ENCODE measurements at regions of chr12 and their contacts with region 1.

Region 1: GRCh38 chr12:12786716-12787601 is 1.5 kb downstream of the APOLD1 start:
- DNase-seq: peak; percentile 74
- H3K4me3 ChIP-seq: peak overlapping the region; percentile 51 to 62 (median 58)
- H3K27ac ChIP-seq: peak overlapping the region; percentile 40
- H3K4me1 ChIP-seq: peaks cover 27% of the 10 kb centered on the region
- H3K27me3 ChIP-seq: no peaks in the 10 kb centered on the region
- CTCF ChIP-seq: no peak

Region 2: GRCh38 chr12:12724661-12725545 is 62.1 kb before region 1 on chr12:
- CTCF ChIA-PET with region 1: no interaction called
- dilution Hi-C with region 1: no loop called
- in situ Hi-C with region 1: no loop called
- intact Hi-C with region 1: loop called (anchors 1 kb)
- DNase-seq: peak; percentile 97
- H3K4me3 ChIP-seq: peak overlapping the region; percentile 86 to 95 (median 93)
- H3K27ac ChIP-seq: peak overlapping the region; percentile 94
- H3K4me1 ChIP-seq: peaks cover 34% of the 10 kb centered on the region
- H3K27me3 ChIP-seq: no peaks in the 10 kb centered on the region
- CTCF ChIP-seq: no peak

Region 3: DNA sequence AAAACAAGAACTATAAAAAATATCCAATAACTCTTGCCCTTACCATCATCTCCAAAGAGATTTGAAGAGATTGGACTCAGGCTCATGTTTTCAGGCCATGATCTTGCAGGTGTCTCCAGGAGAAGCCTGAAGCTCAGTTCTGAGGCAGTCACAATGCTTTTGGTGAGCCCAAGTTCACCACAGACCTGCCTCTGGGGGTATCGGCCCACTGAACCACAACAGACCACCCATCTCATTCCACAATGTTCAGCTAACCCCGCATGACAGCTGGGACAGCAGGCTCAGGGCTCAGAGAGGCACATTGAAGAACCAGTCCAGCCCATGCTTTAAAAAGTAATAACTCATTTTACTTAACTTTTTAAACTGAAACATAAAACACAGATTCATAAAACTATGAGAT is 29.8 kb before region 1 on chr12:
- CTCF ChIA-PET with region 1: no interaction called
- dilution Hi-C with region 1: no loop called
- in situ Hi-C with region 1: no loop called
- intact Hi-C with region 1: no loop called
- DNase-seq: no peak
- H3K4me3 ChIP-seq: no peak overlapping the region
- H3K27ac ChIP-seq: no peak overlapping the region
- H3K4me1 ChIP-seq: no peaks in the 10 kb centered on the region
- H3K27me3 ChIP-seq: no peaks in the 10 kb centered on the region
- CTCF ChIP-seq: no peak

Region 4: DNA sequence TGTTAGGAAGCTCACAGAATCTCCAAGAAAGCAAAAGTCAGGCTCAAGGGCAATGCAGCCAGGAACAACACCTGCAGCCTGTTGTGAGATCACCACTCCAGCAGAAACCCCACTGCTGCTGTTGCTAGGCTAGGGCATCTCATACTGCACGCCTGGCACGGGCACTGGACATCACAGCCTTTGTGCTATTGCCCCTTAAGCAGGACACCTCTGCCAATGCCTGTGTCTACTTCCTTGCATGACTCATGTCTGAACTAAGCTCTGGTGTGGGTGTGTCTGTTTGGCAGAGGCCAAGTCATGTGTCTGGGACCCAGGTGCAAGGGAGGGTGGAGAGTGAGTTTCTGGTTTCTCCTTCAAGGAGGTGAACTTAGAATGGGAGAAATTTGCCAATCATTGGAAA is 16.2 kb after region 1 on chr12:
- CTCF ChIA-PET with region 1: no interaction called
- dilution Hi-C with region 1: no loop called
- in situ Hi-C with region 1: no loop called
- intact Hi-C with region 1: loop called (anchors 1 kb)
- DNase-seq: peak; percentile 100
- H3K4me3 ChIP-seq: no peak overlapping the region
- H3K27ac ChIP-seq: peak overlapping the region; percentile 100
- H3K4me1 ChIP-seq: peaks cover 39% of the 10 kb centered on the region
- H3K27me3 ChIP-seq: no peaks in the 10 kb centered on the region
- CTCF ChIP-seq: no peak

Region 5: DNA sequence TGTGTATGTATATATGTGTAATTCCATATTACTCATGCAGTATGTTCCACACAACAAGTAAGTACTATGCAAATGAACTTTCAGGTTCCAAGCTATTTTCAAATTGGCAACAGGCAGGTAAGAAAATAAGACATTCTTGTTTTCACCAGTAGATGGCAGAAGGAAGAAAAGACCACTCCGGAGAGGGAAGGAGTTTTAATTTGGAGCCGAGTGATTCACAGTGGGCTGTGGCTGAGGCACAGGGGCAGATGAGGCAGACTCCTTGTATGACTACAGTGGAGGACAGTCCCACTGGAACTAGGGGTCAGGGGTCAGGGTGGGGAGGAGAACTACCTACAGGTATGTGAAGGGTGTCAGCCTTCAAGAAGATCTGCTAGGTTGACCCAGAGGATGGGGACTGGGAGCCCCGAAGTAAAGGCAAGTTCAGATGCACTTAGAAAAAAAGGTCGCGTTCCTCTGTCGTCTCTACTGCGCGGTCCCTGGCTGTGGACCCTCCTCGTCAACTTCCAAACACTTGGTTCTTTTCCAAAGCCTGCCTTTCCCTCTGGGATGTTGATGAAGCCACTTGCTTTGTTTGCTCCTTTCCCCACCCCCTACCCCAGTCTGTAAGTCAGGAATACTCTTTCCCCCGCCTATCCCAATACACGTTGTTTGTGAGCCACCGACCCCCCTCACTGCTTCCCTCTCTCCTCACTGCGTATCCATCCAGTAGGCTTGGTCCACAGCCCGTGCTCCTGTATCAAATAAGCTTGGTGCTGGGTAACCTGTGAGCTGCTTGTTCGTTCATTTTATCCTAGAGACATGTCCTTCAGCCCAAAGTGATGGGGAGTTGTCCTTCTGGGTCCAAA is 50.3 kb after region 1 on chr12:
- CTCF ChIA-PET with region 1: interaction called, 3 read pairs
- dilution Hi-C with region 1: no loop called
- in situ Hi-C with region 1: no loop called
- intact Hi-C with region 1: loop called (anchors 1 kb)
- DNase-seq: peak; percentile 91
- H3K4me3 ChIP-seq: no peak overlapping the region
- H3K27ac ChIP-seq: peak overlapping the region; percentile 99
- H3K4me1 ChIP-seq: peaks cover 68% of the 10 kb centered on the region
- H3K27me3 ChIP-seq: no peaks in the 10 kb centered on the region
- CTCF ChIP-seq: peak; percentile 67 to 69

Region 6: GRCh38 chr12:12899530-12900380 is 112.8 kb after region 1 on chr12:
- CTCF ChIA-PET with region 1: no interaction called
- dilution Hi-C with region 1: no loop called
- in situ Hi-C with region 1: loop called in 1 of 2 experiments (anchors 5 kb)
- intact Hi-C with region 1: no loop called
- DNase-seq: peak; percentile 79
- H3K4me3 ChIP-seq: no peak overlapping the region
- H3K27ac ChIP-seq: peak overlapping the region; percentile 53
- H3K4me1 ChIP-seq: peaks cover 66% of the 10 kb centered on the region
- H3K27me3 ChIP-seq: no peaks in the 10 kb centered on the region
- CTCF ChIP-seq: no peak

Region 7: GRCh38 chr12:12975322-12976077 is 188.5 kb after region 1 on chr12:
- CTCF ChIA-PET with region 1: interaction called, 13 read pairs
- dilution Hi-C with region 1: no loop called
- in situ Hi-C with region 1: loop called in 1 of 2 experiments (anchors 10 kb)
- intact Hi-C with region 1: no loop called
- DNase-seq: peak; percentile 27
- H3K4me3 ChIP-seq: no peak overlapping the region
- H3K27ac ChIP-seq: peak overlapping the region; percentile 41
- H3K4me1 ChIP-seq: peaks cover 24% of the 10 kb centered on the region
- H3K27me3 ChIP-seq: no peaks in the 10 kb centered on the region
- CTCF ChIP-seq: peak; percentile 38 to 61

Region 8: DNA sequence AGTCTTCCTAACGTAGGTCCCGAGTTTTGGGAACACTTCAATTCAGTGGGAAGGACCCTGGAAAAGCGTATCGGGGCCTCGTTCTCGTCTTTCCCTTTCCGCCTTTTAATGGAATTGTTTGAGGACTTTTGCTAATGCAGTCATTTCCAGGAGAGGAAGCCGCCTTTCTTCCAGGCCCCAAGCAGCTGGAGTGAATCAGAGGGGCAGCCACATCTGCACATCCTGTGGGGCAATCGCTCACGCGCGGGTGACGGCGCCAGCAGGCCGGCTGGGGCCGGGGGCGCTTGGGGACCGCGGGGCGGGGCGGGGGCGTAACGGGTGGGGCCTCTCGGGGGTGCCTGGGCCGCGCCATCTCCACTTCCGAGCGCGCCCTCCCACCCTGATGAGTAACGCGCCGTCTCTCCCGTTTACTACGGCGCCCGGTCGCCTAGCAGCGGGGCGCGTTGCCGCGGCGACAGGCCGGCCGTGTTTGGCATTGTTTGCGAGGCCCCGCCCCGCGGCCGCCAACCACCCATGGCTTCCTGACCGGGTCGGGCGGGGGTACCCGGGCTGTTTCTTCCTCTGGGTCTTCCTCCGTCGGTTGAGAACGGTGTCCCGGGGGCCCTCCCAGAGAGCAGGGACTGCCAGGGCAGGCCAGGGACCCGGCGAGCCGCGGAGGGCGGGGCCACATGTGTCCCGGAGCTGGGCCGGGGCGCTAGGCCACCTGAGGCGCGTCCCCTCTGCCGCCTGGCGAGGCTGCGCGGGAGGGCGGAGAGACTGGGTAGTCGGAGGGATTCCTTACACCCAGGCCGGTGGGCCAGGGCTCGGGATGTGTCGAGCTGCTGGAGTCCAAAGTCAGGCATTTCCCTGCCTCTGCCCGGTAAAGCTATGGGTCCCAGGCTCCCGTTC is 314.2 kb after region 1 on chr12:
- CTCF ChIA-PET with region 1: no interaction called
- dilution Hi-C with region 1: no loop called
- in situ Hi-C with region 1: no loop called
- intact Hi-C with region 1: loop called (anchors 5 kb)
- DNase-seq: peak; percentile 89
- H3K4me3 ChIP-seq: peak overlapping the region; percentile 28 to 47 (median 32)
- H3K27ac ChIP-seq: peak overlapping the region; percentile 100
- H3K4me1 ChIP-seq: peaks cover 54% of the 10 kb centered on the region
- H3K27me3 ChIP-seq: no peaks in the 10 kb centered on the region
- CTCF ChIP-seq: no peak

Region 9: GRCh38 chr12:13223179-13223859 is 436.4 kb after region 1 on chr12:
- CTCF ChIA-PET with region 1: no interaction called
- dilution Hi-C with region 1: no loop called
- in situ Hi-C with region 1: no loop called
- intact Hi-C with region 1: no loop called
- DNase-seq: peak; percentile 83
- H3K4me3 ChIP-seq: no peak overlapping the region
- H3K27ac ChIP-seq: peak overlapping the region; percentile 75
- H3K4me1 ChIP-seq: peaks cover 29% of the 10 kb centered on the region
- H3K27me3 ChIP-seq: no peaks in the 10 kb centered on the region
- CTCF ChIP-seq: no peak

Measured in mammary epithelial cell (primary cell).